ENCODE measurements at regions of chr9 and their contacts with region 1.

Region 1: GRCh38 chr9:137445275-137445807 is 4.2 kb upstream of the ENTPD8 start:
- DNase-seq: peak; percentile 83
- H3K4me3 ChIP-seq: peak overlapping the region in 1 of 2 experiments; percentile 35; a peak in 1 of 4 replicates
- H3K27ac ChIP-seq: no peak overlapping the region
- H3K4me1 ChIP-seq: peaks cover 0 to 10% of the 10 kb centered on the region in 2 experiments; a peak in 2 of 4 replicates
- H3K27me3 ChIP-seq: peaks cover 4% of the 10 kb centered on the region; the same call in 1 of the 2 replicates
- CTCF ChIP-seq: peak; percentile 89
- EP300 ChIP-seq: no peak
- RAD21 ChIP-seq: peak; percentile 72

Region 2: GRCh38 chr9:137396227-137396626 is 49.1 kb before region 1 on chr9:
- CTCF ChIA-PET with region 1: no interaction called
- POLR2A ChIA-PET with region 1: no interaction called
- DNase-seq: no peak
- H3K4me3 ChIP-seq: no peak overlapping the region
- H3K27ac ChIP-seq: no peak overlapping the region
- H3K4me1 ChIP-seq: no peaks in the 10 kb centered on the region
- H3K27me3 ChIP-seq: no peaks in the 10 kb centered on the region
- CTCF ChIP-seq: no peak
- EP300 ChIP-seq: no peak
- RAD21 ChIP-seq: no peak

Region 3: DNA sequence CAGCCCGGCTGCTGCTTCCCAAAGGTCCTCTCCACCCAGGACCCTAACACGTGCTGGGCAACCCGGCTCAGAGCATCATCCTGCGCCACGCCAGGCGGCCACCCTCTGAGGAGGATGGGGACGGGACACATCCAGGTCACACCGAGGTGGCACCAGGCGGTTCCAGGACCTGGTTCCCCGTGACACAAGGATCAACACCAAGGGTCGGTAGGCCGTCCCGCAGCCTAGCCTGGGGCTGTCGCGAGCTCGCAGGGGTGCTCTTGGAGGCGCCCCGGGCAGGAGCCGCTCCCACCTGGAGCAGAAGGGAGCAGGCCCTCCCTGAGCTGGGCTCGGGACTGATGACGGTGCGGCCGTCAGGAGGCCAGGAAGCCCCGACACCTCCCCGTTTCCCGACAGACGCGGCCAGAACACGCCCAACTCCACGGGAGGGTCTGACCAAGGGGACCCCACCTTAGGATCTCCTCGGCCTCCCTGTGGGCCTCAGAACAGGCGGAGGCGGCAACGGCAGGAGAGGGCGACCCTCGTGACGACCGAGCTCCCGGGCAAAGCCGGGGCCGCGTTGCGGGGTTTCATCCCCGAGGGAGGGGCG is 28.7 kb before region 1 on chr9:
- CTCF ChIA-PET with region 1: no interaction called
- POLR2A ChIA-PET with region 1: no interaction called
- DNase-seq: no peak
- H3K4me3 ChIP-seq: no peak overlapping the region
- H3K27ac ChIP-seq: no peak overlapping the region
- H3K4me1 ChIP-seq: peaks cover 2 to 10% of the 10 kb centered on the region in 2 experiments; a peak in 3 of 4 replicates
- H3K27me3 ChIP-seq: no peaks in the 10 kb centered on the region
- CTCF ChIP-seq: no peak
- EP300 ChIP-seq: no peak
- RAD21 ChIP-seq: no peak

Region 4: GRCh38 chr9:137429974-137430722 is 15.2 kb before region 1 on chr9:
- CTCF ChIA-PET with region 1: interaction called, 25 read pairs
- POLR2A ChIA-PET with region 1: interaction called, 3 read pairs
- DNase-seq: peak; percentile 86
- H3K4me3 ChIP-seq: peak overlapping the region in 1 of 2 experiments; percentile 33; a peak in 2 of 4 replicates
- H3K27ac ChIP-seq: no peak overlapping the region
- H3K4me1 ChIP-seq: peaks cover 0 to 14% of the 10 kb centered on the region in 2 experiments; a peak in 1 of 4 replicates
- H3K27me3 ChIP-seq: no peaks in the 10 kb centered on the region
- CTCF ChIP-seq: no peak
- EP300 ChIP-seq: no peak
- RAD21 ChIP-seq: no peak

Region 5: DNA sequence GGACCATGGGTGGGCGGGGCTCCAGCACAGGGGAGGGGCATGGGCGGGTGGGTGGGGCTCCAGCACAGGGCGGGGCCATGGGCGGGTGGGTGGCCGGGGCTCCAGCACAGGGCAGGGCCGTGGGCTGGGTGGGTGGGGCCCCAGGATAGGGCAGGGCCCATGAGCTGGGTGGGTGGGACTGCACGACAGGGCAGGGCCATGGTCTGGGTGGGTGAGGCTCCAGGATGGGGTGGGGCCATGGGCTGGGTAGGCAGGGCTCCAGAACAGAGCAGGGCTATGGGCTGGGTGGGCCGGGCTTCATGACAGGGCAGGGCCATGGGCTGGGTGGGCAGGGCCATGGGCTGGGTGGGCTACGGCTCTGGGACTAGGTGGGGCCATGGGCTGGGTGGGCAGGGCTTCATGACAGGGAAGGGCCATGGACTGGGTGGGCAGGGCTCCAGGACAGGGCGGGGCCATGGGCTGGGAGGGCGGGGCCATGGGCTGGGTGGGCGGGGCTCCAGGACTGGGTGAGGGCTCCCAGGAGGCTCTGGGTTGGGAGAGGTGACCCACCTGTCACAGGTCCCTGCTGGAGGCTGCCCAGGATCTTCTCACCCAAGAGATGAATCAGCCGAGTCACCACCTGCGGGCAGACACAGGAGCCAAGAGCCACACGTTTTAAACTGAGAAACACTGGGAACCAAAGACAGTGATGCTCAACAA is 47.3 kb after region 1 on chr9:
- CTCF ChIA-PET with region 1: no interaction called
- POLR2A ChIA-PET with region 1: no interaction called
- DNase-seq: peak; percentile 84
- H3K4me3 ChIP-seq: no peak overlapping the region
- H3K27ac ChIP-seq: no peak overlapping the region
- H3K4me1 ChIP-seq: peaks cover 0 to 10% of the 10 kb centered on the region in 2 experiments; a peak in 1 of 4 replicates
- H3K27me3 ChIP-seq: no peaks in the 10 kb centered on the region
- CTCF ChIP-seq: no peak
- EP300 ChIP-seq: no peak
- RAD21 ChIP-seq: no peak